Posterior cingulate gyrus (tissue), 11 donors: ENCODE measurements at regions of chr1 and their contacts with region 1.

Region 1: DNA sequence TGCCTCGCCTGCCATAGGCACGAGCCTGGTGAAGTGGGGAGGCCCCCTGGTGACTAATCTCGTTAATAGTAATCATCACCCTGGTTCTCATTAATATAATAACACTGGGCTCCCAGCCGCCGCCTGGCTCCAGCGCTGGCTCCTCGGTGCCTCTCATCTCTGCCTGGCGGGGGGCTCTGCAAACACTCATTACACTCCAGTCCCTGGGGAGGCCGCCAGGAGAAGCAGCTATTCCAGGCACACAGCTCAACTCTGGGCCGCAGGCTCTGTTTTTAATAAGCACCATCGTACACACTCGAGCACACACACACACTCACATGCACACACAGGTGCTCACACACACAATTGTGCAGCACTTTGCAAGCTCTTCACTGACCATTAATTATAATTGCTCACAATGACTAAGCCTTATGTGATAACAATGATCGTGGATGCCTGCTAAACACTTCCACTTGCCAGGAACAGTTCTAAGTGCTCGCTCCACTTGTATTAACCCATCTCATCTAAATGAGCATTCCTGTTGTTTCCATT is 52.2 kb downstream of the SDC3 start:
- DNase-seq: peak in 8 of 10 donors; percentile 39 to 90 (median 55)

Region 2: GRCh38 chr1:30801771-30802198 is 54.5 kb before region 1 on chr1:
- intact Hi-C with region 1: loop called (anchors 5 kb)
- DNase-seq: peak; percentile 79 to 98 (median 94)